ENCODE measurements at regions of chrX and their contacts with region 1.

Region 1: DNA sequence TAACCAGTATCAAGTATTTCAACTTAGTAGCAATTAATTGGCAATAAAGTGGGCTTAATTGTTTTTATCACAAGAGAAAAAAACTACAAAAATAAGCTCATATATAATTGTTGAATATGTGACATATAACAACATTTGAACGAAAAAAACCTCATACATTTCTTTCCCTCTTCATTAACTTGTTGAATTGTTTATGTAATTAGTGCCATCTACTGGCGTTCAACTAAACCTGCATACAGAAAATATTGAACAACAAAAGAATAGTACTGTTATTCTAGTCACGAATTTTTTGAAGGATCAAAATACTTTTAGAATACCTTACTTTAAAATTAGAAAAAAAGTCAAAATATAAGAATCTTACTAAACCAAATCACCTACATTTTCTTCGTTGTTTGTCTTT is 586.5 kb upstream of the FTHL17 start:
- DNase-seq: no peak
- ATAC-seq: no peak
- H3K4me3 Mint-ChIP-seq: no peak overlapping the region
- H3K27ac Mint-ChIP-seq: no peak overlapping the region
- H3K4me1 Mint-ChIP-seq: no peaks in the 10 kb centered on the region
- H3K27me3 Mint-ChIP-seq: no peaks in the 10 kb centered on the region

Region 2: GRCh38 chrX:30971774-30972603 is 686.4 kb before region 1 on chrX:
- CTCF ChIA-PET with region 1: no interaction called
- POLR2A ChIA-PET with region 1: no interaction called
- intact Hi-C with region 1: loop called in 1 of 2 experiments (anchors 2 kb)
- DNase-seq: peak; percentile 41
- ATAC-seq: peak; percentile 86
- H3K4me3 Mint-ChIP-seq: peak overlapping the region; percentile 57
- H3K27ac Mint-ChIP-seq: no peak overlapping the region
- H3K4me1 Mint-ChIP-seq: peaks cover 14% of the 10 kb centered on the region
- H3K27me3 Mint-ChIP-seq: peaks cover 4% of the 10 kb centered on the region

Region 3: DNA sequence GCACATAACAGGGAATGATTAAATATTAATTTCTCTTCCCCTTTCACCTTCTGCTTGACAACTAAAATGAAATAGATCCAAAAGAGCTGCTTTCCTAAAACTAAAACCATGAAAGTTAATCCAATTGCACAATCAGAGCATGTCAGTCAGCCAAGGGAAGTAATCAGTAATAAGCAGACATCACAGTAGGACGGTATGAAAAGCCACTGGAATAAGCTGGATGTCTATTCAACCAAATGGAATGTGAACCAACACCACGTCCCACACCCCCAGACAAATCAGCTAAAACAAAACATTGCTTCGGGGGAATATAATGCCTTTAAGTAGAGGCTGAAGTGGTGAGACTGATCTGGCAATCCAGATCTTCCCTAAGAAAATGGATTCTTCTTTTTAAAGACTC is 272.9 kb after region 1 on chrX:
- CTCF ChIA-PET with region 1: no interaction called
- POLR2A ChIA-PET with region 1: no interaction called
- intact Hi-C with region 1: no loop called
- DNase-seq: no peak
- ATAC-seq: no peak
- H3K4me3 Mint-ChIP-seq: no peak overlapping the region
- H3K27ac Mint-ChIP-seq: no peak overlapping the region
- H3K4me1 Mint-ChIP-seq: no peaks in the 10 kb centered on the region
- H3K27me3 Mint-ChIP-seq: no peaks in the 10 kb centered on the region

Measured in activated CD4-positive, alpha-beta T cell treated with anti-CD3 and anti-CD28 coated beads for 36 hours (primary cell).